BJ (cell line): ENCODE measurements at regions of chr15 and their contacts with region 1.

Region 1: DNA sequence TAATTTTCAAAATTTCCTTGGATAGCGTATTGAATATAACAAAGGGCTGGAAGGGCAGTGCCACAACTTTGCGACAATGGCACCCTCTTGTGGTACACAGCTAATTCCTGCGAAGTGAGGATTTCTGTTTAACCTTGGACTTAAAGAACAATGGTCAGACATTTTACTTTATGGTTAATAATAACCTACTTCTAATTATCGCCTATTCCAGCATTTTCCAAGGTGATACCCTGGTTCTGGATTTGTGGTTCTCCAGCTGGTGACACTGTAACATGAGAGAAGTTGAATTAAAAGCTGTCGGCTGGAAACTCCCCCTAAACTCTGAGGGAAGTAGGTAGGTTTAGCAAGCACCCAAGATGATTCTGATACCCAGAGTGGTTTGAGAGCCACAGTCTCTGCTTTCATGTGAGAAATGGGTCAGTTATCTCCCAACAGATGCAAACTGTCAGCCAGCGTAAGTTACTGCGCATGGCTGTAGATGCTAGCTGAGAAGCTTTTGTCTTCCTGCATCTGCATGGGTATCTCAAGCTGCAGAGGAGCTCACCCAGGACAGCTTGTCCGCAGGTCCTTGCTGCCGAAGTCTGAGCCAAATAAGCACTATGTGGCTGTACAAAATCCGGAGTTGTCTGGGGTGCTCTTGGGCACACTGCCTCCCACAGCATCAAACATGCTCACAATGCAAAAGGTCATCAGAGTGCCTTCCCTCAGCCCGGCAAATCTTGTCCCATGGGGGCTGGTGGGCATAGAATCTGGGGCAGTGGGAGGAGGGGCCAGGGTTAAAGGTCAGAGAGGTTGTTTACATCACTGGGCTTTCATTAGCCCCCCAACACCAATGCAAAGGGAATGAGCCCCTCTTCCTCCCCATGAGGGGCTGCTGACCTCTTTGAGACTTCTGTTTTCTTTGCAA is 6.6 kb upstream of the CHSY1 start:
- DNase-seq: no peak
- H3K4me3 ChIP-seq: no peak overlapping the region
- H3K27me3 ChIP-seq: no peaks in the 10 kb centered on the region
- CTCF ChIP-seq: peak; percentile 81

Region 2: DNA sequence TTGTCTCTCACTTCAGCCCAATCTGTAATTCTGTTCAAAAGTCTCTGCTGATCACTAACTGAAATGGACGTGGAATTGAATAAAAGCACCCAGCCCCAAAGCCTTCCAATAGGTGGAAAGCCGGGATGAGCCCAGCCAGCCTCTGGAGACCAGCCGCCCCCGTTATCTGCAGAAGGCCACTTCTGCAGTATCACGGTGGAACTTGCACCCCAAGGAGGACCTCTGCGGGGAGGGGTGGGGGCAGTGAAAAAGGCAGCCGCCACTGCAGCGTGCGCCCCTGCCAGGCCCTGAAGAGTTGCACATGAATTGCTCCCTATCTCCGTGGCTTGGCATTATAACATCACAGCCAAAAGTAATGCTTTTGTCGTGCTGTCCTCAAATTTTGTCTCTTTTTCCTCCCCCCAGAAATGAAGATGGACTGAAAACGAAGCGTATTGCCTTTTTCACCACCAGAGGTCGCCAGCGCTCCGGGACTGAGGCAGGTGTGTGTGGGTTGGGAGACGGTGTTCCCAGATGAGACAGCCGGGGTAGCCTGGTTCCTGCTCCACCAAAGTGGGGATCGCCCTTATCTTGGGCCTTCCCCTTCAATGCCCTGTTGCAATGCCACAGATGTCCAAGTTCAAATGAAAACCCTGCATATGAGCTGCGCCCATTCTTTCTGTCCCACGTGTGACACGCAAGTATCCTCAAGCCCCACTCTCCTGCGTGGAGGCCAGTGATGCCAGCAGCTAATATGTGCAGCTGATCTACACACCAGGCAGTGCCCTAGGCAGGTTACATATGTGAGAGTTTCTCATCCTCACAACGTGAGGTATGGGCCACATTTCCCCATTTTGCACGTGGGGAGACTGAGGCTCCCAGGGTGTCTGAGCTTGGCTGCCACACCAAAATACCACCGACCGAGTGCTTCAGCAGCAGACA is 243.3 kb before region 1 on chr15:
- CTCF ChIA-PET with region 1: interaction called, 73 read pairs
- POLR2A ChIA-PET with region 1: no interaction called
- DNase-seq: no peak
- H3K4me3 ChIP-seq: no peak overlapping the region
- H3K27me3 ChIP-seq: no peaks in the 10 kb centered on the region
- CTCF ChIP-seq: peak; percentile 89

Region 3: GRCh38 chr15:101020945-101021344 is 237.5 kb before region 1 on chr15:
- CTCF ChIA-PET with region 1: interaction called, 73 read pairs
- POLR2A ChIA-PET with region 1: no interaction called
- DNase-seq: no peak
- H3K4me3 ChIP-seq: no peak overlapping the region
- H3K27me3 ChIP-seq: no peaks in the 10 kb centered on the region
- CTCF ChIP-seq: no peak

Region 4: GRCh38 chr15:101088788-101089583 is 169.5 kb before region 1 on chr15:
- CTCF ChIA-PET with region 1: interaction called, 43 read pairs
- POLR2A ChIA-PET with region 1: no interaction called
- DNase-seq: no peak
- H3K4me3 ChIP-seq: no peak overlapping the region
- H3K27me3 ChIP-seq: no peaks in the 10 kb centered on the region; the same call in 1 of the 2 replicates
- CTCF ChIP-seq: peak; percentile 79

Region 5: DNA sequence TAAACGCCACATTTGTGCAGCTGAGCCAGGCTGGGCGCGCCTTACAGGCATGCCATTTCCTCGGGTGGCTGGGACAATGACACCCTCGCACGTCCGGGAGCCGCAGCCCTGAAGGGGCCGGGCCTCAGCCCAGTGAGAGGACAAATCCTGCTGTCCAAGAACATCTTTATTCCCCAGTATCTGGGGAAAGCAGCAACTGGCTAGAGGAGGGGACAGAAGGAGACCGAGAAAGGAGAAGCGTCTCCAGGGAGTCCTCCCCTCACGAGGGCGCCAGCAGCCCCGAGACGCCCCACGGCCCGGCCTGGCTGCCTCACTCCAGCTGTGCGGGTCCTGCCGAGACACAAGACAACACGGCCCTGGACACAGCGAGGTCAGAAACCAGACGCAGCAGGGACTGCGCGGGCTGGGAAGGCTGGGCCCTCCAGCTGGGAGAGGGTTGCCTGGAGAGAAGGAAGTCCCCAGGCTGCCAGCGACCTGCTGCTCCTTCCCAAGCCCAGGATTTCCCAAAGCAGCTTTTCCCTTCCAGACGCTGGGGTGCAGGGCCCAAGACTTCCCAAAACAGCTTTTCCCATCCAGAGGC is 136.9 kb before region 1 on chr15:
- CTCF ChIA-PET with region 1: interaction called, 16 read pairs
- POLR2A ChIA-PET with region 1: no interaction called
- DNase-seq: no peak
- H3K4me3 ChIP-seq: no peak overlapping the region
- H3K27me3 ChIP-seq: no peaks in the 10 kb centered on the region
- CTCF ChIP-seq: peak; percentile 65